GM12878 (cell line): ENCODE measurements at regions of chr6 and their contacts with region 1.

Region 1: DNA sequence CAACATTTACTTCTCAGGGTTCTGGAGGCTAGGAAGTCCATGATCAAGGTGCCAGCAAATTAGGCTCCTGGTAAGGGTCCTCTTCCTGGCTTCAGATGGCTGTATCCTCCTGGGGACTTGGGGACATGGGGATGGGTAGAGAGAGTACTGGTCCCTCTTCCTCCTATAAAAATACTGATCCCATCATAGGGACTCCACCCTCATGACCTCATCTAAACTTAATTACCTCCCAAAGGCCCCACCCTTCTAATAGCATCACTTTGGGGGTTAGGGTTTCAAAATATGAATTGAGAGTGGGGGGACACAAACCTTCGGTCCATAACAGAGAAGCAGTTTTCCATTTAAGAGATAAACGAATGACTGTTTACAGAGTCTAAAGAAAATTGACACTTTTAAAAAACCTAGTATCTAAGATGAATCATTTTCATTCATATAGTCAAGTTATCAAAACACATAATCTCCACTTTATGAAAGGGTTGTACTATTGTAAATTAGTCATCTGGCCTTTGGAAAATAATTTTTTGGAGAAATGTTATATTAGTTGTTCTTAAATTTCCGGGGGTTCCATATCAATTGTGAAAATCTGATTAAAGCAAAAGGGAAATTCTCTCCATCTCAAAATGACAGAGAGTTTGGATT is 33.5 kb downstream of the ELOVL5 start:
- DNase-seq: no peak
- ATAC-seq: no peak
- H3K4me3 ChIP-seq: no peak overlapping the region
- H3K27ac ChIP-seq: no peak overlapping the region
- H3K4me1 ChIP-seq: peaks cover 13% of the 10 kb centered on the region
- H3K27me3 ChIP-seq: no peaks in the 10 kb centered on the region
- CTCF ChIP-seq: no peak
- EP300 ChIP-seq: no peak
- POLR2A ChIP-seq: no peak
- RAD21 ChIP-seq: no peak

Region 2: DNA sequence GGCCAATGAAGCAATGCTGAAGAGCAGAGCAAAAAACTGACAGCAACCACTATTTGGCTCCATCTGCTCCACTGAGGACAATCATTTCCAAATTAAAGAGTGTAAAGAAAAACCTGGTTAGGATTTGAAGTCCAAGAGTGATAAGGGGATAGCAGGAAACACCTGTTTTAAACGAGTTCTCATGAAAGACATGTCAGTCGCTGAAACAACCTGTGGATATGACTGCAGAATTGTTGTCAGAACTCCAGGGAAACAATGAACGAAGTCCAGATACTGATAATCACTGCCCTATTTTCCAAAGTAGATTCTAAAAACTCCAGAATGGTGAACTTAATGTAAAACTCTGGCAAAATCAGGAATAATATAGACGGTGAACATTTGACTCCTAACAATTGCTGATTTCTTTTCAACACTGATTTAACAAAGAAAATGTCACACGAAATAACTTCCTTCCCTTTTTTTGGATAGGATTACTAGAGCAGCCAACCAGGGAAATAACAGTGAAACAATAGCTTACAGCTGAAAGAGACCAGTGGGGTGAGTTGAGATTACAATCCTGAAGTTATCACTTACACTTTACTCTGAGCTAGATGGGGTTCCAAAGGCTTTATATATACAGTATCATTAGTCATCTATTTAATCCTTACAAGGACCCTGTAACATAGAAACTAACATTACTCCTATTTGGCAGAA is 50.1 kb before region 1 on chr6:
- CTCF ChIA-PET with region 1: no interaction called
- POLR2A ChIA-PET with region 1: no interaction called
- RAD21 ChIA-PET with region 1: no interaction called
- SMC1A ChIA-PET with region 1: no interaction called
- in situ Hi-C with region 1: no loop called
- intact Hi-C with region 1: no loop called
- DNase-seq: no peak
- ATAC-seq: no peak
- H3K4me3 ChIP-seq: no peak overlapping the region
- H3K27ac ChIP-seq: no peak overlapping the region
- H3K4me1 ChIP-seq: no peaks in the 10 kb centered on the region
- H3K27me3 ChIP-seq: no peaks in the 10 kb centered on the region
- CTCF ChIP-seq: no peak
- EP300 ChIP-seq: no peak
- POLR2A ChIP-seq: no peak
- RAD21 ChIP-seq: no peak

Region 3: GRCh38 chr6:53335208-53335994 is 20.2 kb after region 1 on chr6:
- CTCF ChIA-PET with region 1: interaction called, 13 read pairs
- POLR2A ChIA-PET with region 1: interaction called, 22 read pairs
- RAD21 ChIA-PET with region 1: interaction called, 29 read pairs
- SMC1A ChIA-PET with region 1: interaction called, 135 read pairs
- in situ Hi-C with region 1: no loop called
- intact Hi-C with region 1: no loop called
- DNase-seq: peak; percentile 88
- ATAC-seq: peak; percentile 90
- H3K4me3 ChIP-seq: peak overlapping the region; percentile 72
- H3K27ac ChIP-seq: peak overlapping the region; percentile 85
- H3K4me1 ChIP-seq: peaks cover 22% of the 10 kb centered on the region
- H3K27me3 ChIP-seq: no peaks in the 10 kb centered on the region
- CTCF ChIP-seq: no peak
- EP300 ChIP-seq: peak in 1 of 2 experiments; percentile 68; a peak in 2 of 4 replicates
- POLR2A ChIP-seq: peak; percentile 34; the same call in 1 of the 2 replicates
- RAD21 ChIP-seq: no peak

Region 4: GRCh38 chr6:53500095-53500494 is 184.9 kb after region 1 on chr6:
- CTCF ChIA-PET with region 1: no interaction called
- POLR2A ChIA-PET with region 1: no interaction called
- RAD21 ChIA-PET with region 1: no interaction called
- SMC1A ChIA-PET with region 1: no interaction called
- in situ Hi-C with region 1: no loop called
- intact Hi-C with region 1: no loop called
- DNase-seq: no peak
- ATAC-seq: no peak
- H3K4me3 ChIP-seq: no peak overlapping the region
- H3K27ac ChIP-seq: no peak overlapping the region
- H3K4me1 ChIP-seq: no peaks in the 10 kb centered on the region
- H3K27me3 ChIP-seq: no peaks in the 10 kb centered on the region
- CTCF ChIP-seq: no peak
- EP300 ChIP-seq: no peak
- POLR2A ChIP-seq: no peak
- RAD21 ChIP-seq: no peak